ENCODE measurements at regions of chr9 and their contacts with region 1.

Region 1: GRCh38 chr9:99825172-99826046 is 3.7 kb downstream of the NR4A3 start:
- DNase-seq: no peak
- ATAC-seq: no peak
- H3K4me3 Mint-ChIP-seq: peak overlapping the region; percentile 88
- H3K27ac Mint-ChIP-seq: peak overlapping the region; percentile 0
- H3K4me1 Mint-ChIP-seq: peaks cover 50% of the 10 kb centered on the region
- H3K27me3 Mint-ChIP-seq: peaks cover 20% of the 10 kb centered on the region

Region 2: GRCh38 chr9:98775831-98776441 is 1049.5 kb before region 1 on chr9:
- CTCF ChIA-PET with region 1: no interaction called
- POLR2A ChIA-PET with region 1: no interaction called
- intact Hi-C with region 1: no loop called
- DNase-seq: peak; percentile 47
- ATAC-seq: no peak
- H3K4me3 Mint-ChIP-seq: no peak overlapping the region
- H3K27ac Mint-ChIP-seq: no peak overlapping the region
- H3K4me1 Mint-ChIP-seq: no peaks in the 10 kb centered on the region
- H3K27me3 Mint-ChIP-seq: no peaks in the 10 kb centered on the region

Region 3: GRCh38 chr9:99851500-99851822 is 26.1 kb after region 1 on chr9:
- CTCF ChIA-PET with region 1: interaction called, 6 read pairs
- POLR2A ChIA-PET with region 1: no interaction called
- intact Hi-C with region 1: loop called in 1 of 2 experiments (anchors 2 kb)
- DNase-seq: peak; percentile 47
- ATAC-seq: peak; percentile 76
- H3K4me3 Mint-ChIP-seq: no peak overlapping the region
- H3K27ac Mint-ChIP-seq: no peak overlapping the region
- H3K4me1 Mint-ChIP-seq: peaks cover 27% of the 10 kb centered on the region
- H3K27me3 Mint-ChIP-seq: no peaks in the 10 kb centered on the region

Region 4: DNA sequence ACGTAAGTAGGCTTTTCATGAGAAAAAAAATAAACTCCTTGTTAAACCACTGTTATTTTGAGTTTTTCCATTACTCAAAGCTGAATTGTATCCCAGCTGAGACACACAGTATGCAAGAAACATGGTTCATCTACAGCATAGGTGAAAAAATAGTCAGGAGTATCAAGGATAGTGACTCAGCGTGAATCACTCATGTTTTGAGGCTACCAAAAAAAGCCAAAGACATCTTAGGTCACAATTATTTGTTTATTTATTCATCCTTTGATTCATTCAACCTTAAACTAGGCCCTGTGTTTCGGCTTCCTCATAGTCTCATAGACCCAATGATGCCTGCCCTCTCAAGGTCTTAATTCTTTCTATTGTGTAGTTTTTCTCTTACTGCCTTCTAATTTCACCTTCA is 48.1 kb after region 1 on chr9:
- CTCF ChIA-PET with region 1: interaction called, 4 read pairs
- POLR2A ChIA-PET with region 1: no interaction called
- intact Hi-C with region 1: loop called (anchors 1 to 5 kb)
- DNase-seq: no peak
- ATAC-seq: peak; percentile 76
- H3K4me3 Mint-ChIP-seq: no peak overlapping the region
- H3K27ac Mint-ChIP-seq: peak overlapping the region; percentile 44
- H3K4me1 Mint-ChIP-seq: peaks cover 18% of the 10 kb centered on the region
- H3K27me3 Mint-ChIP-seq: peaks cover 2% of the 10 kb centered on the region

Region 5: DNA sequence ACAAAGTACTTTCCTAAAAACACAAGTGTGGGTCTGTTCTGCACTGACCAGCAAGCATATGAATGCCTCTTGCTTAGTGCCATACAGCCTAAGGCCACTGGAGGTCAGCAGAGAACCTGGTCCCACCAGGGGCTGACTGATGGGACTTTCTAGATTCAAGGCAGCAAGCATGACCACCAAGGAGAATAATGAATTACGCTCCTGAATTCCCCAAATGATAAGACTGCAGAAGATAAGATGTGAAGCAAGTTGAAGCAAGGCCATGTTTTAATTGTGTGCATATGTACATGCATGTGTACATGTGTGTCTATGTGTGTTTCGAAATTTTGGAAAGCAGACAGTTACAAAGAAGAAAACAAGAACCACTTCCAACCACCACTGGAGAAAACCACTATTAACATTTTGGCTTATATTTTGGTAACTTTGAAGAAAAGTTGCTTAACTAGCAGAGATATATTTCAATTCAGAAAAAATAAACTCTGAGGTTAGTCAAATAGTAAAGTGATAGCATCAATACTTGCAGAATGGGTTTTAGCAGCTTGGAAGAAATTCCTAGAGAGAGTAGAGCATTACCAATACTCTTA is 202.9 kb after region 1 on chr9:
- CTCF ChIA-PET with region 1: no interaction called
- POLR2A ChIA-PET with region 1: no interaction called
- intact Hi-C with region 1: no loop called
- DNase-seq: peak; percentile 82
- ATAC-seq: peak; percentile 93
- H3K4me3 Mint-ChIP-seq: no peak overlapping the region
- H3K27ac Mint-ChIP-seq: no peak overlapping the region
- H3K4me1 Mint-ChIP-seq: peaks cover 3% of the 10 kb centered on the region
- H3K27me3 Mint-ChIP-seq: no peaks in the 10 kb centered on the region